BJ (cell line): ENCODE measurements at regions of chr22 and their contacts with region 1.

Region 1: DNA sequence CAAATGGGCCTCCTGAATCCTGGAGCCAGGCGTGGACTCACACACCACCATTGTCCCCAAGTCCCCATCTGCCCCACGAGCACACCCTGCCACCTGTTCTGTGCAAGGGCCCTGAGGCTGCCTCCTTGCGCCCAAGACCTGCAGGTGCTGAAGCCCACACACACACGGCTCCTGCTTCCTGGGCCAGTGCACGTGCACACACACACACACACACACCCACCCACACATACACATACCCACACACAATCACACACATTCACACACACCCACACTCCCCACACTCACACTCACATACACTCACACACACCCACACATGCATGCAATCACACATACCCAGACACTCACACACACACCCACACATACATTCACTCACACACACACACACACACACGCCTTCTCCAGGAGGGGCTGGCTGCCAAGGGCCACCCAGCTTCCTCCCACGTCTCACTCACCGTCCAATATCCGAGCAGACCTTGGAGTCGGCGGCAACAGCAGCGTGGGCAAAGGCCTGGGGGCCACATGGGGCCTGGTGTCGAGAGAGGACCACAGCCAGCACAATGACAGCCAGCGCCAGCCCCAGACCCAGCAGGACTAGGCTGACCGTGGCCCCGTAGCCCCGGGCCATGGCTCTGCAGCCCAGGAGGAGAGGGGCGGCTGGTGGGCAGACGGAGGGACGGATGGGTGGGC is 638 bp downstream of the GGT5 start:
- DNase-seq: no peak
- H3K4me3 ChIP-seq: no peak overlapping the region; the same call in 1 of the 2 replicates
- H3K27me3 ChIP-seq: no peaks in the 10 kb centered on the region
- CTCF ChIP-seq: no peak

Region 2: GRCh38 chr22:24200616-24201212 is 43.5 kb before region 1 on chr22:
- CTCF ChIA-PET with region 1: interaction called, 17 read pairs
- POLR2A ChIA-PET with region 1: no interaction called
- DNase-seq: no peak
- H3K4me3 ChIP-seq: no peak overlapping the region
- H3K27me3 ChIP-seq: no peaks in the 10 kb centered on the region
- CTCF ChIP-seq: no peak